ENCODE measurements at regions of chr4 and their contacts with region 1.

Region 1: DNA sequence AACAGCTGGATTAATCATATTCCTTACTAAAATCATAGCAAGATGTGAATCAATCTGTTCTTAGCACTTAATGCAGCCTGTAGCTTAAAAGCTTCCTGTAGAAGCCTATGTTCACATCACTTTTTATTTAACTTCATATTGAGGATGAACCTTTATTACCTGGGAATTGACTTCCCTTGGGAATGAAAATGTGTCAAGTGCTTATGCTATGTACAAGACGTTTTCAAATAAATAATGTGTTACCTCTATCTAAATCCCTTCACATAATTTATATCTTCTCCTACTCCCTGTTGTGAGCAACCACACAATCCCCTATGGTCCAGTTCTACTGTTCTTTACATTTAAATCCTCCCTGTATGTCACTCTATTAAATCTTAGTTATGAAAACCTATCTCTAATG is 633.1 kb downstream of the FSTL5 start:
- DNase-seq: no peak
- ATAC-seq: no peak
- H3K4me3 ChIP-seq: no peak overlapping the region
- H3K27ac ChIP-seq: no peak overlapping the region
- H3K4me1 ChIP-seq: no peaks in the 10 kb centered on the region
- H3K27me3 ChIP-seq: no peaks in the 10 kb centered on the region
- CTCF ChIP-seq: no peak

Region 2: GRCh38 chr4:161393602-161394001 is 137.1 kb before region 1 on chr4:
- intact Hi-C with region 1: no loop called
- DNase-seq: no peak
- ATAC-seq: no peak
- H3K4me3 ChIP-seq: no peak overlapping the region
- H3K27ac ChIP-seq: no peak overlapping the region
- H3K4me1 ChIP-seq: no peaks in the 10 kb centered on the region
- H3K27me3 ChIP-seq: no peaks in the 10 kb centered on the region
- CTCF ChIP-seq: no peak

Region 3: GRCh38 chr4:161799710-161800109 is 269.0 kb after region 1 on chr4:
- intact Hi-C with region 1: loop called in 1 of 10 experiments (anchors 5 kb)
- DNase-seq: no peak
- ATAC-seq: no peak
- H3K4me3 ChIP-seq: no peak overlapping the region
- H3K27ac ChIP-seq: no peak overlapping the region
- H3K4me1 ChIP-seq: no peaks in the 10 kb centered on the region
- H3K27me3 ChIP-seq: no peaks in the 10 kb centered on the region
- CTCF ChIP-seq: no peak